Caco-2 (cell line): ENCODE measurements at regions of chr7 and their contacts with region 1.

Region 1: DNA sequence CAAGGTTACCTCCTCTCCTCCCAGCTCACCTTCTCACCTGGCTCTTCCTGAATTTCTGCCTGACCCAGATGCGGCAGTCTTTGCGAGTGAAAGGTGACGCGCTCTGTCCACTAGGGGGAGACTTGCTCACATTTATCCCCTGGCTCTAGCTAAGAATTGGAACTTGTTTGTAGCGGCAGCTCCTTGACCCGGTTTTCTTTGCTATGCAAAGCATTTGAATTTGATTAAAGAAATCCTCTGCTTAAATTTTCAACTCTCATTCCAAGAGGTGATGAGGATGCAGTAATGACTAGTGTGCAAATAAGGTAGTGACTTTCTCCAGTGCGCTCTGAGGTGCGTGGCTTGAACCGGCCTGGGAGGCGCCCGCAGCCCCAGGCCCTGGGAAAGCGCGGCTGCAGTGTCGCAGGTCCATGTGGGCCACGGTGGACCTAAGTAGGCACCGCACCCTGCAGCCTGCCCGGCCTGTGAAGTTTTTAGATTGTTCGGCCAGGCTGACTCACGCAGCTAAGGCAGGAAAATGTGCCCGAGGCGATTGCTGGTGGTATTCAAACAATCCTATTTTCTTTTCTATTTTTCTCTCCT is 336.9 kb upstream of the NPSR1 start:
- DNase-seq: peak; percentile 73 to 76
- H3K4me3 ChIP-seq: no peak overlapping the region
- H3K4me3 Mint-ChIP-seq: peak overlapping the region; percentile 17
- H3K27ac Mint-ChIP-seq: no peak overlapping the region
- H3K4me1 ChIP-seq: no peaks in the 10 kb centered on the region
- H3K4me1 Mint-ChIP-seq: no peaks in the 10 kb centered on the region
- H3K27me3 ChIP-seq: no peaks in the 10 kb centered on the region
- H3K27me3 Mint-ChIP-seq: no peaks in the 10 kb centered on the region
- CTCF ChIP-seq: peak; percentile 88

Region 2: GRCh38 chr7:34260279-34260678 is 60.8 kb before region 1 on chr7:
- CTCF ChIA-PET with region 1: no interaction called
- POLR2A ChIA-PET with region 1: no interaction called
- intact Hi-C with region 1: no loop called
- DNase-seq: no peak
- H3K4me3 ChIP-seq: no peak overlapping the region
- H3K4me3 Mint-ChIP-seq: no peak overlapping the region
- H3K27ac Mint-ChIP-seq: no peak overlapping the region
- H3K4me1 ChIP-seq: no peaks in the 10 kb centered on the region
- H3K4me1 Mint-ChIP-seq: no peaks in the 10 kb centered on the region
- H3K27me3 ChIP-seq: no peaks in the 10 kb centered on the region
- H3K27me3 Mint-ChIP-seq: no peaks in the 10 kb centered on the region
- CTCF ChIP-seq: no peak

Region 3: DNA sequence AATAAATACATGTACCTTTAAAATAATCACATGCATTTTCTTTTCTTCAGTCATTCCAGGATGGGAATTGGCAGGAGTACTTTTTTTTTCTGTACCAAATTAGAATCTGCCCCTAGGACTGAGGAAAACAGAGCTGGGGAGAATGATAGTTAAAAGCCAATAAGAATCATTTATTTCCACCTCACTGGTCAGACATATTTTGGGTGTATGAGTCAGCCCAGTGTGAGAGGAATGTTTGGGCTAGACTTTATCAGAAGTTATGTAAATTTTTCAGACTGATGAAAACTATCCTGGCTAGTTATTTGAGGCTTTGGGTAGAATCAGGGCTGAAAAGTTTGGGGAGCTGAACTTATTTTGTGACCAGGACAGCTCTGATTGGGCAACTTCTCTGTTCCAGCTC is 33.8 kb after region 1 on chr7:
- CTCF ChIA-PET with region 1: no interaction called
- POLR2A ChIA-PET with region 1: no interaction called
- intact Hi-C with region 1: no loop called
- DNase-seq: no peak
- H3K4me3 ChIP-seq: no peak overlapping the region
- H3K4me3 Mint-ChIP-seq: no peak overlapping the region
- H3K27ac Mint-ChIP-seq: no peak overlapping the region
- H3K4me1 ChIP-seq: no peaks in the 10 kb centered on the region; the same call in 1 of the 2 replicates
- H3K4me1 Mint-ChIP-seq: no peaks in the 10 kb centered on the region
- H3K27me3 ChIP-seq: no peaks in the 10 kb centered on the region
- H3K27me3 Mint-ChIP-seq: no peaks in the 10 kb centered on the region
- CTCF ChIP-seq: no peak

Region 4: GRCh38 chr7:34430458-34430857 is 109.4 kb after region 1 on chr7:
- CTCF ChIA-PET with region 1: interaction called, 3 read pairs
- POLR2A ChIA-PET with region 1: no interaction called
- intact Hi-C with region 1: loop called (anchors 1 kb)
- DNase-seq: peak; percentile 40 to 48
- H3K4me3 ChIP-seq: no peak overlapping the region
- H3K4me3 Mint-ChIP-seq: no peak overlapping the region
- H3K27ac Mint-ChIP-seq: no peak overlapping the region
- H3K4me1 ChIP-seq: no peaks in the 10 kb centered on the region
- H3K4me1 Mint-ChIP-seq: no peaks in the 10 kb centered on the region
- H3K27me3 ChIP-seq: no peaks in the 10 kb centered on the region
- H3K27me3 Mint-ChIP-seq: peaks cover 5% of the 10 kb centered on the region
- CTCF ChIP-seq: peak; percentile 37 to 43

Region 5: GRCh38 chr7:34596892-34597291 is 275.8 kb after region 1 on chr7:
- CTCF ChIA-PET with region 1: interaction called, 8 read pairs
- POLR2A ChIA-PET with region 1: no interaction called
- intact Hi-C with region 1: loop called (anchors 2 kb)
- DNase-seq: peak in 1 of 2 experiments; percentile 13
- H3K4me3 ChIP-seq: no peak overlapping the region
- H3K4me3 Mint-ChIP-seq: no peak overlapping the region
- H3K27ac Mint-ChIP-seq: no peak overlapping the region
- H3K4me1 ChIP-seq: no peaks in the 10 kb centered on the region
- H3K4me1 Mint-ChIP-seq: no peaks in the 10 kb centered on the region
- H3K27me3 ChIP-seq: no peaks in the 10 kb centered on the region
- H3K27me3 Mint-ChIP-seq: peaks cover 6% of the 10 kb centered on the region
- CTCF ChIP-seq: peak in 1 of 2 experiments; percentile 19